B cell (primary cell): ENCODE measurements at regions of chr1 and their contacts with region 1.

Region 1: DNA sequence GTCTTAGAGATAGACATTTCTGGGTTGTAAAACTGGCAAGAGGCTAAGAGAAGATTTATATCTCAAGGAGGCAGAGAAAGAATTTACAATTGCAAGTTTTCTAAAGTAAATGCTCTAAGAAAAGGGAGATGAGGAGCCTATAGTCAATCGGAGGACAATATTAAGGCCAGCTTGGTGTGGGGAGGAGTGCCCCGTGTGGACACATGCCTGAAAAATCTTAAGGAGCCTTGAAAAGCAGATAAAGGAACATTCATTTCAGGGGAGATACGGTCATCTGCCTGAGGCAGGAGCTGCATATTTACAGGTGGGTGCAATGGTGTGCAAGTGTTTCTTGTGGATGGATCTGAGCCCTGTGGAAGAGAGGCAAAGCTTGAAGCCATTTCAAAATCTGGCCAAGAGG is 25.6 kb downstream of the FCRL2 start:
- DNase-seq: no peak
- ATAC-seq: no peak
- H3K4me3 ChIP-seq: no peak overlapping the region
- H3K4me3 Mint-ChIP-seq: no peak overlapping the region
- H3K27ac ChIP-seq: peak overlapping the region in 1 of 2 donors; percentile 9
- H3K27ac Mint-ChIP-seq: peak overlapping the region; percentile 72
- H3K4me1 ChIP-seq: peaks cover 12 to 16% of the 10 kb centered on the region in 2 donors
- H3K4me1 Mint-ChIP-seq: peaks cover 41% of the 10 kb centered on the region
- H3K27me3 ChIP-seq: no peaks in the 10 kb centered on the region
- H3K27me3 Mint-ChIP-seq: no peaks in the 10 kb centered on the region
- CTCF ChIP-seq: peak; percentile 8

Region 2: GRCh38 chr1:157739229-157739901 is 11.9 kb before region 1 on chr1:
- CTCF ChIA-PET with region 1: interaction called, 17 read pairs
- POLR2A ChIA-PET with region 1: interaction called, 3 read pairs
- intact Hi-C with region 1: no loop called
- DNase-seq: no peak
- ATAC-seq: peak; percentile 6
- H3K4me3 ChIP-seq: no peak overlapping the region
- H3K4me3 Mint-ChIP-seq: no peak overlapping the region
- H3K27ac ChIP-seq: peak overlapping the region; percentile 16 to 24
- H3K27ac Mint-ChIP-seq: peak overlapping the region; percentile 77
- H3K4me1 ChIP-seq: peaks cover 38 to 39% of the 10 kb centered on the region in 2 donors
- H3K4me1 Mint-ChIP-seq: peaks cover 50% of the 10 kb centered on the region
- H3K27me3 ChIP-seq: no peaks in the 10 kb centered on the region
- H3K27me3 Mint-ChIP-seq: no peaks in the 10 kb centered on the region
- CTCF ChIP-seq: no peak